Right ventricle myocardium inferior (tissue), 1 donor: ENCODE measurements at regions of chr2 and their contacts with region 1.

Region 1: GRCh38 chr2:3594493-3595281 is at the start of gene COLEC11:
- DNase-seq: peak; percentile 85
- ATAC-seq: peak; percentile 88
- total RNA-seq, gene COLEC11: 1.9 TPM

Region 2: DNA sequence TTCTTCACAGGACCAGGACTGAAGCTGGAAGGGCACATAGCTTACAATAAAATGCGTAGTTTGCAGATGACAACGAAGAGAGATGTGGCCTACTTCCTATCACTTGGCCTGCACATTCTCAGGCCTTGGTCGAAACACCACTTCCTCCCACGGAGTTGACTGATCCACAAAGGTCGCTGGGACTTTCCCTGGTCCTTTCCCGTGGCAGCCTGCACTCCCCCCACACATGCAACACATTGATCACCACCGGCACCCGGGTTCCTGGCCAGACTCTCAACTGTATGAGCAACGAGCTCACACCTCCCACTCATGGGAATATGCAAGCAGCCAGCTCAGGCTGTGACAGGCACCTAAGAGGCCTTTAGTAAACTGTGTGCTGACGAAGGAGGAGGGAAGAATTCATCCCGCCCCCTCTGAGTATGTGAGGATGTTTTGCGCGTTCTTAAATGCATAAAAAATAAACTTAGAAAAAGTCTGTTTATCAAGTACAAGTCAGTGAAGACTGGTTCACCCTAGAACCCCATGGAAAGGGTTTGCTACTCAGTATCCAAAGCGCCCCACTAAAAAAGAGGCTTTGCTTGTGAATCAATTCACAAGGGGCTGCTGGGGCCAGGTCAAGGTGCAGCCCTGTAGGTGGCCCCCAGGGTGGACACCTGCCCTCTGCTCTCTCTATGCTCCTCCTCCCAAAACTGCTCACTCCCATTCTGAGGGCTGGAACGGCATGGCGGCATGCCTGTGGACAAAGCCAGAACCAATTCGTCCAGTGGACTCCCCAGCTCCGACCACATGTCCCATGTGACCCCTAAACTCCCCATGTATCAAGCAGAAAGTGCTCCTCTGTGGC is 371.4 kb before region 1 on chr2:
- intact Hi-C with region 1: no loop called
- DNase-seq: no peak
- ATAC-seq: no peak

Region 3: DNA sequence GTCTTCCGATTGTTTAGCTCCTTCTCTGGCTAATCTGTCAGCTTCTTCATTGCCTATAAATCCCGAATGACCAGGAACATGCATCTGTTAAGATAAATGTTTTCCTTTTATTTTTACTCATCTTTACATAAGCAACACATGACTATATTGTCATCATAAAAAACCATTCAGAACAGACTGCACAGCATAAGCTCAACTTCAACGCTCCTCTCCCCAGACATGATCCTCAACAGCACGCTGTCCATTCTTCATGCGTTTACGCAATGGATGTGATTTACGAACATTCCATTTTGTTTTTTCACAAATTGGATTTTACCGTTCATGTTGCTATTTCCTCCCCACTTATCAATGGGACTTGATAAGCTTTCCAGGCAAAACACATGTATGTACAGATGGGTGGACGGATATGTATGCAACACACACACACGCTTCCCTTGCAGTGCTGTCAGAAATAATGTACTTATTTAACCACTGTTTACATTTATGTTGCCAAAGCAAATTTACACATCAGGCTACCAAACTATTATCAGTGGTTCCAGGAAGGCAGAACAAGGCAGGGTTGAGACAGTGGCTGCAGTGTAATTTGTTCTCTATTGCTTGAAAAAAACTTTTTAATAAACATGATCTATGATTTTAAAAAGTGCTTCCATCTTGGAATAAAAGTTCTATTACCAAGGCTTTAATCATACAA is 48.8 kb before region 1 on chr2:
- intact Hi-C with region 1: no loop called
- DNase-seq: no peak
- ATAC-seq: no peak

Region 4: GRCh38 chr2:3626118-3626811 is 31.6 kb after region 1 on chr2:
- intact Hi-C with region 1: loop called (anchors 2 kb)
- DNase-seq: no peak
- ATAC-seq: peak; percentile 56